Cardiac septum (tissue), 1 donor: ENCODE measurements at regions of chr3 and their contacts with region 1.

Region 1: GRCh38 chr3:25513642-25514266 is 85.7 kb downstream of the RARB start:
- DNase-seq: no peak

Region 2: GRCh38 chr3:25433868-25434267 is 79.9 kb before region 1 on chr3:
- intact Hi-C with region 1: loop called (anchors 5 kb)
- DNase-seq: no peak

Region 3: GRCh38 chr3:25468866-25469319 is 44.9 kb before region 1 on chr3:
- intact Hi-C with region 1: loop called (anchors 5 kb)
- DNase-seq: peak; percentile 82

Region 4: GRCh38 chr3:25992599-25992998 is 478.8 kb after region 1 on chr3:
- intact Hi-C with region 1: no loop called
- DNase-seq: no peak